Activated CD8-positive, alpha-beta T cell treated with anti-CD3 and anti-CD28 coated beads, Interleukin-2, amount 10 ng/mL, durations not matched to agents 7 days and 5 days (primary cell): ENCODE measurements at regions of chr11 and their contacts with region 1.

Region 1: GRCh38 chr11:117843666-117844484 is 19.3 kb upstream of the FXYD2 start:
- DNase-seq: peak; percentile 90
- ATAC-seq: peak; percentile 85
- H3K4me3 Mint-ChIP-seq: no peak overlapping the region
- H3K27ac Mint-ChIP-seq: no peak overlapping the region
- H3K4me1 Mint-ChIP-seq: peaks cover 7% of the 10 kb centered on the region
- H3K27me3 Mint-ChIP-seq: peaks cover 11% of the 10 kb centered on the region

Region 2: GRCh38 chr11:117743123-117743815 is 100.6 kb before region 1 on chr11:
- CTCF ChIA-PET with region 1: no interaction called
- POLR2A ChIA-PET with region 1: no interaction called
- DNase-seq: no peak
- ATAC-seq: no peak
- H3K4me3 Mint-ChIP-seq: no peak overlapping the region
- H3K27ac Mint-ChIP-seq: no peak overlapping the region
- H3K4me1 Mint-ChIP-seq: peaks cover 5% of the 10 kb centered on the region
- H3K27me3 Mint-ChIP-seq: peaks cover 11% of the 10 kb centered on the region

Region 3: DNA sequence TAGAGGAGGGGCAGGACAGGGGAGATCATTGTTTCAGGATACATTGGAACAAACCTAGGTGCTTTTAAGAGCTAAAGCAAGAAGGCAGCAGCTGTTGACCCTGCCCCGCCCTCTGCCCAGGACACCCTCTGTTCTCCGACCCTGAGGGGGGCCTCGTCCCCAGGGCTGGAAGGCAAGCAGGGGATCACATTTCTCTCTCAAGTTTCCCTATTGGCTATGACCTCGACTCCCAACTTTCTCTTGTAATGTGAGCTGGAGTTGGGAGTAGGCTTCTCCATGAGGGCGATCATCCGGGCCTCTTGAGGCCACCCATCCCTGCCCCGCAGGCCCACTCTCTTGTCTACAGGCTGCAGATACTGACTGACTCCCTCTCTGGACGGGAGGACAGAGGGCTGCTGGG is 84.6 kb before region 1 on chr11:
- CTCF ChIA-PET with region 1: no interaction called
- POLR2A ChIA-PET with region 1: no interaction called
- DNase-seq: no peak
- ATAC-seq: no peak
- H3K4me3 Mint-ChIP-seq: no peak overlapping the region
- H3K27ac Mint-ChIP-seq: no peak overlapping the region
- H3K4me1 Mint-ChIP-seq: no peaks in the 10 kb centered on the region
- H3K27me3 Mint-ChIP-seq: no peaks in the 10 kb centered on the region

Region 4: DNA sequence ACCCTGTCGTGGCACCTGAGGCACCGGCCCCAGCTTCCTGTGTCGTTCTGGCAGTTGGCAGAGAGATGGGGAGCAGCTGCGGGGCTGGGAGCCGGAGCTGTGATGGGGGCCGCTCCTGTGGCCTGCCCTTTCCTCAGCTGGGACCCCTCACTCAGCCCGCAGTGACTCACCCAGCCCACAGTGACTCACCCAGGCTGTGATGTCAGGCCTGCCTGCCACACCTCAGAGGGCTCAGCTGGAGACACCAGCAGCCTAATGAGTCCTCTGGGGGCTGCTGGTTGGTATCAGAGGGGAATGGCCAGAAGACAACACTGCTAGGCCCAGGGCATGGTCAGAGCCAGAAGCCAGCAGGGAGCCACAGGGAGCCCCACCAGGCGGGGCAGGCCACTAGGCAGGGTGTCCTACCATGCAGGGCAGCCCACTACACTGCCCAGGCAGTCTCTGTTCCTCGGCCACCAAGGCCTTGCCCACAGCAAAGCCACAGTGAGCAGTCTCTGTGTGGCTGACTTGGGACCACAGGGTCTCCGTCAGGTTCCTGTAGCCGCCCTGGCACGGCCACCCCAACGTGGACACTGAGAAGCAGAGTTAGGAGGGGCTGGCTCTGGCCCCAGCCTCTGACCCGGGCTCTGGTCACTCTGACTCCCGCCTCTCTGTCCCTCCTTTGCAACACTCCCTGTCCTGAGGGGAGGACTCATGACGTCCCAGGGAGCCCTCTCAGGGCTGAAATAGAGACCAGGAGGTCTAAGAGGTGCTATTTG is 15.1 kb before region 1 on chr11:
- CTCF ChIA-PET with region 1: interaction called, 49 read pairs
- POLR2A ChIA-PET with region 1: no interaction called
- DNase-seq: peak; percentile 92
- ATAC-seq: peak; percentile 88
- H3K4me3 Mint-ChIP-seq: peak overlapping the region; percentile 48
- H3K27ac Mint-ChIP-seq: peak overlapping the region; percentile 90
- H3K4me1 Mint-ChIP-seq: peaks cover 83% of the 10 kb centered on the region
- H3K27me3 Mint-ChIP-seq: no peaks in the 10 kb centered on the region

Region 5: DNA sequence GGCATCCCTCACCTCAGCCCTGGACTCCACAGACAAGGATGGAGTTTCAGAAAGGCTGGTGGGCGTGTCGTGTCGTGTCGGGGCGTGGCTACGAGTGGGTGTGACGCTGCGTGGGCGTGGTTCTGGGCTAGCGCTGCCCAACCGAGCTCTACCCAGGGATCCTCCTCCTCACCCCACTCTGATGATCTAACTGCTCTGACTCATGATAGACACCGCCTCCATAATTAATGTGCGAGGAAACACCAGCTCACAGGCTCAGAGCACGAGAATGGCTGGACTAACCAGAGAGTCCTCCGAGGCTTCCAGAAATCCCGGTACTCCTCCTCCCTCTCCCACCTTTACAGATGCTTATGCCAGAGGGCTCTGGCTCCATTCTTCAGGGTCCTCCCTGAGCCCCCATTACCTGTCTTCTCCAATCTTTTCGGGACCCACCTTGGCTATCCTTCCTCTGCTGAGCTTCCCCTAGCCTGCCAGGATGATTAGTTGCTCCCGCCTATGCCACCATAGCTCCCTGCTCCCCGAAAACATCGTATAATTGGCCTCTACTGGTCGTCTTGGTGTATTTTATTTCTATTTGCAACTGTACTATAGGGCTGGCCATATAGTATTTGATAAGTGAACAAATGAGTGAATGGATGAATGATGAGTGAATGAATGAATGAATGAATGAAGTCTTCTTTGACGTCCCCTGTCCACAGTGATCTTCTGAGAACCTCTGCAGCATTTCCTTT is 63.5 kb after region 1 on chr11:
- CTCF ChIA-PET with region 1: interaction called, 21 read pairs
- POLR2A ChIA-PET with region 1: no interaction called
- DNase-seq: peak; percentile 78
- ATAC-seq: peak; percentile 95
- H3K4me3 Mint-ChIP-seq: peak overlapping the region; percentile 22
- H3K27ac Mint-ChIP-seq: peak overlapping the region; percentile 70
- H3K4me1 Mint-ChIP-seq: peaks cover 20% of the 10 kb centered on the region
- H3K27me3 Mint-ChIP-seq: no peaks in the 10 kb centered on the region